IMR-90 (cell line): ENCODE measurements at regions of chr5 and their contacts with region 1.

Region 1: GRCh38 chr5:39376293-39376714 is 12.0 kb upstream of the C9 start:
- DNase-seq: peak; percentile 48
- ATAC-seq: peak; percentile 49
- H3K4me3 ChIP-seq: no peak overlapping the region
- H3K27ac ChIP-seq: no peak overlapping the region
- H3K4me1 ChIP-seq: peaks cover 6% of the 10 kb centered on the region; the same call in 1 of the 2 replicates
- H3K27me3 ChIP-seq: no peaks in the 10 kb centered on the region
- CTCF ChIP-seq: peak; percentile 72
- POLR2A ChIP-seq: 0 out of 2 replicates have a peak, but pooled peaks have one; percentile 2
- RAD21 ChIP-seq: peak; percentile 74

Region 2: GRCh38 chr5:38994324-38994927 is 381.9 kb before region 1 on chr5:
- CTCF ChIA-PET with region 1: no interaction called
- POLR2A ChIA-PET with region 1: no interaction called
- dilution Hi-C with region 1: no loop called
- in situ Hi-C with region 1: no loop called
- intact Hi-C with region 1: loop called (anchors 10 kb)
- DNase-seq: peak; percentile 76
- ATAC-seq: peak; percentile 63
- H3K4me3 ChIP-seq: no peak overlapping the region
- H3K27ac ChIP-seq: no peak overlapping the region
- H3K4me1 ChIP-seq: no peaks in the 10 kb centered on the region
- H3K27me3 ChIP-seq: no peaks in the 10 kb centered on the region
- CTCF ChIP-seq: peak; percentile 67
- POLR2A ChIP-seq: no peak
- RAD21 ChIP-seq: peak; percentile 81

Region 3: GRCh38 chr5:39187831-39188731 is 188.2 kb before region 1 on chr5:
- CTCF ChIA-PET with region 1: no interaction called
- POLR2A ChIA-PET with region 1: no interaction called
- dilution Hi-C with region 1: no loop called
- in situ Hi-C with region 1: no loop called
- intact Hi-C with region 1: no loop called
- DNase-seq: no peak
- ATAC-seq: no peak
- H3K4me3 ChIP-seq: no peak overlapping the region
- H3K27ac ChIP-seq: no peak overlapping the region
- H3K4me1 ChIP-seq: no peaks in the 10 kb centered on the region
- H3K27me3 ChIP-seq: peaks cover 12% of the 10 kb centered on the region
- CTCF ChIP-seq: no peak
- POLR2A ChIP-seq: no peak
- RAD21 ChIP-seq: no peak

Region 4: GRCh38 chr5:39411051-39411450 is 34.7 kb after region 1 on chr5:
- CTCF ChIA-PET with region 1: no interaction called
- POLR2A ChIA-PET with region 1: no interaction called
- dilution Hi-C with region 1: no loop called
- in situ Hi-C with region 1: no loop called
- intact Hi-C with region 1: no loop called
- DNase-seq: peak; percentile 84
- ATAC-seq: peak; percentile 66
- H3K4me3 ChIP-seq: no peak overlapping the region
- H3K27ac ChIP-seq: no peak overlapping the region
- H3K4me1 ChIP-seq: peaks cover 30% of the 10 kb centered on the region
- H3K27me3 ChIP-seq: no peaks in the 10 kb centered on the region
- CTCF ChIP-seq: no peak
- POLR2A ChIP-seq: no peak
- RAD21 ChIP-seq: no peak

Region 5: GRCh38 chr5:39547553-39548154 is 171.3 kb after region 1 on chr5:
- CTCF ChIA-PET with region 1: interaction called, 17 read pairs
- POLR2A ChIA-PET with region 1: interaction called, 3 read pairs
- dilution Hi-C with region 1: no loop called
- in situ Hi-C with region 1: loop called (anchors 5 kb)
- intact Hi-C with region 1: loop called (anchors 1 kb)
- DNase-seq: peak; percentile 68
- ATAC-seq: peak; percentile 86
- H3K4me3 ChIP-seq: no peak overlapping the region
- H3K27ac ChIP-seq: no peak overlapping the region
- H3K4me1 ChIP-seq: peaks cover 1% of the 10 kb centered on the region; the same call in 1 of the 2 replicates
- H3K27me3 ChIP-seq: no peaks in the 10 kb centered on the region; the same call in 1 of the 2 replicates
- CTCF ChIP-seq: peak; percentile 81
- POLR2A ChIP-seq: no peak
- RAD21 ChIP-seq: peak; percentile 82

Region 6: GRCh38 chr5:39570403-39571027 is 194.2 kb after region 1 on chr5:
- CTCF ChIA-PET with region 1: interaction called, 7 read pairs
- POLR2A ChIA-PET with region 1: no interaction called
- dilution Hi-C with region 1: no loop called
- in situ Hi-C with region 1: no loop called
- intact Hi-C with region 1: loop called (anchors 1 kb)
- DNase-seq: peak; percentile 61
- ATAC-seq: peak; percentile 79
- H3K4me3 ChIP-seq: no peak overlapping the region
- H3K27ac ChIP-seq: no peak overlapping the region
- H3K4me1 ChIP-seq: no peaks in the 10 kb centered on the region
- H3K27me3 ChIP-seq: peaks cover 13% of the 10 kb centered on the region
- CTCF ChIP-seq: peak; percentile 79
- POLR2A ChIP-seq: no peak
- RAD21 ChIP-seq: peak; percentile 82

Region 7: GRCh38 chr5:40755407-40756365 is 1379.4 kb after region 1 on chr5 and contains the start of gene TTC33:
- CTCF ChIA-PET with region 1: no interaction called
- POLR2A ChIA-PET with region 1: no interaction called
- dilution Hi-C with region 1: no loop called
- in situ Hi-C with region 1: loop called (anchors 25 kb)
- intact Hi-C with region 1: no loop called
- DNase-seq: peak; percentile 93
- ATAC-seq: peak; percentile 91
- H3K4me3 ChIP-seq: peak within 1 kb of the TSS; percentile 92
- H3K27ac ChIP-seq: peak within 1 kb of the TSS; percentile 88
- H3K4me1 ChIP-seq: peaks cover 4% of the 10 kb centered on the region; the same call in 1 of the 2 replicates
- H3K27me3 ChIP-seq: no peaks in the 10 kb centered on the region
- CTCF ChIP-seq: peak; percentile 80
- POLR2A ChIP-seq: peak; percentile 27; the same call in 1 of the 2 replicates
- RAD21 ChIP-seq: peak; percentile 38; the same call in 1 of the 2 replicates
- total RNA-seq, gene TTC33: 8.1 and 11.7 TPM in 2 replicates